Heart left ventricle (tissue), 16 donors: ENCODE measurements at regions of chr12 and their contacts with region 1.

Region 1: DNA sequence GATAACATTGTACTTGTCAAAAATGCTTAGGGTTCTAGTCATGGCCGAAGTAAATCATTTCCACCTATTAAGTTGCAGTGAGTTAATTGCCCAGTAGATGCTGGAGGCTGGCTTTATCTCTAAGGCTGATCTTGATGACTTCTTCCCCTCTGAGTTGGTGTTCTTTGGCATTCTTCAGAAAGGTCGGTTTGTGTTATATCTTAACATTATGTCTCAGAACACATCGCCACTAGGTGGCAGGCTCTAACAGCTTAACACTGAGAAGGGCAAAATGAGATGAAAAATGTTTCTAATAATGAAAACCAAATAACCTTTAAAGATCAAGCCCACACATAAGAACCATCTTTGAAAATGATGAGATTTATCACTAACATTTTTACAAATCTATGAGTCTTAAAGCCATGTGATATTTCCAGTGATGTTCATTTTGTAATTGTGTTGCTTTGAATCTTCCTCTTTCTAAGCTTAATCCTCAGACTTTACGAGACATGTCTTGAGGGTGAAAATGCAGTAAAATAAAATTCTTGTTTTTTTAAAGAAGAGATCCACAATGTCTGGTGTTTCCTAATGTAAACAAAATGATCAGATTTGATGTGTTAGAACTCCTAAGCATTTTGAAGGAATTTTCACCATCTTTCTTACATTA is 28.6 kb downstream of the SUDS3 start:
- DNase-seq: peak in 4 of 5 donors; percentile 37 to 52 (median 44)
- ATAC-seq: peak in 2 of 4 donors; percentile 41 to 53
- H3K4me3 ChIP-seq: no peak overlapping the region
- H3K27ac ChIP-seq: peak overlapping the region in 1 of 12 donors; percentile 0
- H3K4me1 ChIP-seq: peaks cover 0 to 2% (median 0%) of the 10 kb centered on the region in 12 donors
- H3K27me3 ChIP-seq: no peaks in the 10 kb centered on the region
- CTCF ChIP-seq: peak; percentile 55 to 79 (median 71)
- POLR2A ChIP-seq: no peak

Region 2: DNA sequence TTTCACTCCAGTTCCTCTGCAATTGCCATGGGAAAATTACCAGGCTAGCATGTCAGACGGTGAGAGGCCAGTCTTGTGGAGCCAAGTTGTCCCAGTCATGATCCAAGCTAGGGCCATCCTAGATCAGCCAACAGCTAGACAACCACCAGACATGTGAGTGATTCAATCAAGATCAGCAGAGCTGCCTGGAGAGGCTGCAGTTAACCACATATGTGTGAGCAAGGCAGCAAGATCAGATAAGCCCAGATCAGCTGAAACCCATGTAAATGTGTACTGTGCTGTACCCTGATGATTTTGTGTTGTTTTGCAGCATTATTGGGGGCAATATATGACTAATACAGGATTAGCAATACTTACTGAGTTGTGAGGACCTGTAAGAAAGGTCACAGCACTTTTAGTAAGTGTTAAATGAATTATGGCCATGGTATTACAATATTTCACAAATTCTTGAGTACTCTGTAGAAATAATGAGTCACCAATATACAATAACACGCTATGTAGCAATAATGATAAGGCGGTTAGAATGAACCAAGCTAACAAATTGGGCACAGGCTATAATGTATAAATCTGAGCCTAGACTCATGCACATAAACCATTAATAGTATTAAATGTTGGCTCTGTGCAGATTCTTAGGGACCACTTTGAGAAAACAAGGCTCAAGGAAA is 62.8 kb after region 1 on chr12:
- intact Hi-C with region 1: no loop called
- DNase-seq: no peak
- ATAC-seq: no peak
- H3K4me3 ChIP-seq: no peak overlapping the region
- H3K27ac ChIP-seq: no peak overlapping the region
- H3K4me1 ChIP-seq: no peaks in the 10 kb centered on the region
- H3K27me3 ChIP-seq: no peaks in the 10 kb centered on the region
- CTCF ChIP-seq: no peak
- POLR2A ChIP-seq: no peak

Region 3: GRCh38 chr12:118608770-118609344 is 203.9 kb after region 1 on chr12:
- intact Hi-C with region 1: loop called in 2 of 10 experiments (anchors 10 kb)
- DNase-seq: no peak
- ATAC-seq: peak in 1 of 4 donors; percentile 33
- H3K4me3 ChIP-seq: no peak overlapping the region
- H3K27ac ChIP-seq: no peak overlapping the region
- H3K4me1 ChIP-seq: no peaks in the 10 kb centered on the region
- H3K27me3 ChIP-seq: no peaks in the 10 kb centered on the region
- CTCF ChIP-seq: peak in 6 of 12 donors; percentile 13 to 25 (median 20)
- POLR2A ChIP-seq: no peak

Region 4: GRCh38 chr12:118625050-118625675 is 220.2 kb after region 1 on chr12:
- intact Hi-C with region 1: loop called in 2 of 10 experiments (anchors 10 kb)
- DNase-seq: peak in 2 of 5 donors; percentile 32 to 35
- ATAC-seq: peak; percentile 82 to 93 (median 84)
- H3K4me3 ChIP-seq: no peak overlapping the region
- H3K27ac ChIP-seq: peak overlapping the region in 1 of 12 donors; percentile 4
- H3K4me1 ChIP-seq: peaks cover 0 to 3% (median 0%) of the 10 kb centered on the region in 12 donors
- H3K27me3 ChIP-seq: no peaks in the 10 kb centered on the region
- CTCF ChIP-seq: no peak
- POLR2A ChIP-seq: no peak

Region 5: DNA sequence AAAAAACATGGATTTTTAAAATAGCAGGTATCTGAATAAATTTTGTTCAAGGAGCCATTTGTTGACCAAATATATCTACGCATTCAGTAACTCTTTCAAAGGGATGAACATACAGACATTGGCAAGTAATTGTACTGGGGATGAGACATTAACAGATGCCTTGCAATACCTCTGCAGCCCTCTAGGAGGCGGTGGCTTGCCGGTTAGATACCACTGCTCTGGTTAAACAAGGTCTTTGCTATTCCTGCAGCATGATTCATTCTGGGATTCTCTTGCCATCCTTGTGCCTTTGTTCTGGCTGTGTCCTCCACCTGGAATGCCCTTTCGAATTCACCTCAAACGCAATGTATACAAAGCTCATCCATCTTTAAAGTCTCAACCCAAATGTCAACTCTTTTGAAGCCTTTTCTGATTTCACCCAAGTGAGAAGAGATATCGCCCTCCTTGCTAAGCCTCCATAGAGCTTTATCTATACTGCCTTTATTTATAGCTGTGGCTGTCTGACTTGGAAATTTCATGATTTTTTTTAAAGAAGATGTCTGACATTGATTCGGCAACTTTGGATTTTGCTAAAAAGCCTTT is 445.3 kb after region 1 on chr12:
- intact Hi-C with region 1: loop called in 1 of 10 experiments (anchors 10 kb)
- DNase-seq: no peak
- ATAC-seq: no peak
- H3K4me3 ChIP-seq: no peak overlapping the region
- H3K27ac ChIP-seq: no peak overlapping the region
- H3K4me1 ChIP-seq: no peaks in the 10 kb centered on the region
- H3K27me3 ChIP-seq: peaks cover 0 to 23% (median 0%) of the 10 kb centered on the region in 9 donors
- CTCF ChIP-seq: peak in 8 of 12 donors; percentile 10 to 45 (median 32)
- POLR2A ChIP-seq: no peak

Region 6: DNA sequence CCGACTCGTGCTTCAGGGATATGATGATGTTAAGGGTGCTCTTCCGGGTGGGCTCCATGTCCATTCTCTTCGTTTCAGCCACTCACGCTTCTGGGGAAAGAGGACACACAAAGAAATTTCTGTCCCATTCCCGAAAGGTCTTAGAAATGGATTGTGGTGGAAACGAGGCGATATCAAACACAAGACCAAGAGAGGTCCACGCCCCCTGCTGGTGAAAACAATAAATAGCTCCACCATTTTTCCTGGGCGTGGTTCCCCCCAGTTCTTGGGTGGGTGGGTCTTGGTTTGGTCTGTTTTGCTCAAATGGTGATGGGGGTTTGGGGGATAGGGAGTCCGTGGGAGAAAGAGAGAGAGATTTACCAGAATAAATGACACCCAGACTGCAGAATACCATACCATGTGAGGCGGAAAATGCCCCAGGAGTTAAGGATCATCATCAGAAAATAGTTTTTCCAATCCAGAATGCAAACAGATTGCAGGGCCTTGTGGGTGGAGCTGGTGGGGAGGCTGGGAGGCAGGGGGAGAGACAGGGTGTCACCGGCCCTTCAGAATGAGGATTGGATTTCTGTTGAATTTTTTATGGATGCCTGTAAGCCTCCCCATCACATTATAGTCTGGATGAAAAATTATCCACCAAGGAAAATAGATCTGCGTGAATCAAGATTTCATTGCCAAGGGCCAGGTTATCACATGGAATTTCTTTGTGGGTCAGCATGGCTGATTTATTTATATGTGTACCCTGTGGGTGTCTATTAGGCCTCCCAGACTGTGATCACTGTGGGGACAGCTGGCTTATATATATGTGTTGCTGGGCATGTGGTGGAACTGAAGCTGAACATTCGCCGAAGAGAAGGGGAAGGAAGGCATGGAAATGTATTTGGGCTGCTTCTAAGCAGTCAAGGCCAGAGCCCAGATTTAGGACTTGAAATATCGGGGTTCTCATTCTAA is 632.2 kb after region 1 on chr12:
- intact Hi-C with region 1: loop called in 4 of 10 experiments (anchors 5 to 10 kb)
- DNase-seq: peak in 2 of 5 donors; percentile 8 to 17
- ATAC-seq: no peak
- H3K4me3 ChIP-seq: no peak overlapping the region
- H3K27ac ChIP-seq: no peak overlapping the region
- H3K4me1 ChIP-seq: no peaks in the 10 kb centered on the region
- H3K27me3 ChIP-seq: peaks cover 0 to 12% (median 0%) of the 10 kb centered on the region in 9 donors
- CTCF ChIP-seq: peak; percentile 31 to 60 (median 46)
- POLR2A ChIP-seq: no peak

Region 7: GRCh38 chr12:119412811-119413794 is 1008.1 kb after region 1 on chr12:
- intact Hi-C with region 1: loop called in 4 of 10 experiments (anchors 5 to 10 kb)
- DNase-seq: peak in 4 of 5 donors; percentile 53 to 67 (median 58)
- ATAC-seq: peak in 3 of 4 donors; percentile 42 to 73 (median 58)
- H3K4me3 ChIP-seq: no peak overlapping the region
- H3K27ac ChIP-seq: no peak overlapping the region
- H3K4me1 ChIP-seq: peaks cover 0 to 6% (median 0%) of the 10 kb centered on the region in 12 donors
- H3K27me3 ChIP-seq: no peaks in the 10 kb centered on the region
- CTCF ChIP-seq: peak; percentile 82 to 93 (median 90)
- POLR2A ChIP-seq: no peak